Esophagus muscularis mucosa (tissue), 4 donors: ENCODE measurements at regions of chr11 and their contacts with region 1.

Region 1: DNA sequence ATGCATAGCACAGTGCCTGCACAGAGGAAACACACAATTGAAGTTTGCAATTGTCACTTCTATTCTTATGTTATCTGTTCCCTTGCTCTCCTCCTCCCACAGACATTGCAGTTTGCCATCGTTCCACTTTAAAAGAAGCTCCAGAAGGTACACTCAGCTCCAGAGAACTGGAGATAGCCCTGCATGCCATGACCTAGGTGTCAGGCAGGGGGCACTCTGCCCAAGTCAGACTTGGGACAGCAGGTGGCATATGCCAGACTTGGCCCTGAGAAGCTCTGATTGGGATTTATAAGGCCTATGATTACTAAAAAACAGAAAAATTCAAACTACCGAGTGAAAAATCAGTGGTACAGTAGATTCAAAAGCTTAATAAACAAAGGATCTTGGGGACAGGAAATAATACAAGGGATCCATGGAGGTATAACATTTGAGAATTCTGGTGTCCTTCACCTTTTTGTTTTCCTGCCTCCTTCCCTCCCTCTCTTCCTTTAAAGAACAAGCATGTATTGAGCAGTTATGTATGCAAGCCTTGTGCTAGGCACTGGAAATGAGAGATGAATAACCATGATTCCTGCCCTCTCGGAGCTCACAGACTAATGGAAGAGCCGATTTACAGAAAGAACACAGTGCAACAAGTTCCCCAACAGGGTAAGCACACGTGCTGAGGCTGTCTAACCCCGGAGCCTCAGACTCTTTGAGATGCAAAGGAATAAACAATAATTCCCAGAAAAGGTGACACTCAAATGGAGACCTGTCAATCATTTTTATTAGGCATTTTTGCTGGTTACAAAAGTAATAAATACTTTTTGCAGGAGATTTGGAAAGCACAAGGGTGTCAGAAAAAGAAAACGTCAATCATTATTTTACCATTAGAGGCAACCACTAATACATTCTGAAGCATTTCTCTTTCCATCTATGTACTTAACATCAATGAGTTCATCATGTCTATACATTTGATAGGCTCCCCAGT is 39.8 kb downstream of the TENM4 start:
- DNase-seq: no peak
- H3K4me3 ChIP-seq: no peak overlapping the region
- H3K27ac ChIP-seq: no peak overlapping the region
- H3K4me1 ChIP-seq: peaks cover 0 to 3% (median 0%) of the 10 kb centered on the region in 4 donors
- H3K27me3 ChIP-seq: no peaks in the 10 kb centered on the region
- CTCF ChIP-seq: peak; percentile 68 to 78 (median 71)
- EP300 ChIP-seq: no peak
- POLR2A ChIP-seq: no peak

Region 2: GRCh38 chr11:79440441-79441194 is 39.6 kb after region 1 on chr11 and contains the start of gene TENM4:
- intact Hi-C with region 1: loop called (anchors 5 kb)
- DNase-seq: no peak
- H3K4me3 ChIP-seq: peak within 1 kb of the TSS; percentile 63 to 84 (median 67)
- H3K27ac ChIP-seq: peak within 1 kb of the TSS; percentile 85 to 90 (median 88)
- H3K4me1 ChIP-seq: peaks cover 44 to 55% (median 54%) of the 10 kb centered on the region in 4 donors
- H3K27me3 ChIP-seq: peaks cover 0 to 56% (median 11%) of the 10 kb centered on the region in 4 donors
- CTCF ChIP-seq: peak; percentile 40 to 47 (median 44)
- EP300 ChIP-seq: no peak
- POLR2A ChIP-seq: no peak
- total RNA-seq, gene TENM4: 4.1 to 9.6 (median 8.0) TPM

Region 3: GRCh38 chr11:79493555-79494171 is 92.7 kb after region 1 on chr11:
- intact Hi-C with region 1: loop called (anchors 2 kb)
- DNase-seq: no peak
- H3K4me3 ChIP-seq: no peak overlapping the region
- H3K27ac ChIP-seq: no peak overlapping the region
- H3K4me1 ChIP-seq: peaks cover 0 to 4% (median 0%) of the 10 kb centered on the region in 4 donors
- H3K27me3 ChIP-seq: no peaks in the 10 kb centered on the region
- CTCF ChIP-seq: peak; percentile 73 to 93 (median 89)
- EP300 ChIP-seq: no peak
- POLR2A ChIP-seq: no peak

Region 4: GRCh38 chr11:79536155-79536917 is 135.3 kb after region 1 on chr11:
- intact Hi-C with region 1: no loop called
- DNase-seq: peak; percentile 78
- H3K4me3 ChIP-seq: no peak overlapping the region
- H3K27ac ChIP-seq: no peak overlapping the region
- H3K4me1 ChIP-seq: no peaks in the 10 kb centered on the region
- H3K27me3 ChIP-seq: no peaks in the 10 kb centered on the region
- CTCF ChIP-seq: no peak
- EP300 ChIP-seq: no peak
- POLR2A ChIP-seq: no peak

Region 5: DNA sequence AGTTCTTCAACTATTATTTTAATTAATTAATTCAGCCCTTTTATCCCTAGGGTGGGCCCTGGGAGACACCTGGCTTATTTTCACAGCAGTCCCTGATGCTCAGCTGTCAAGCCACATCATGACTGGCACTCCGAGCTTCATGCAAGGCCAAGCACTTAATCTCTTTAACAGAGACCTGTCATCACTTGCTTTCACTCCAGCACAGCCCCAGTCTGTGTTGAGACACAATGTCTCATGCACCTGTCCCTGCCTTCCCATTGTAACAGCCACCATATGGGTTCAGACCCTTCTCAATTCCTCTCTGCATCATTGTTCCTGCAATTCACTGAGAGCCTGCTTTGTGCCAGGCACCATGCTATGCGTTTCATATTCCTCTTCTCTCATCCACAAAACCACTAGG is 262.0 kb after region 1 on chr11:
- intact Hi-C with region 1: no loop called
- DNase-seq: no peak
- H3K4me3 ChIP-seq: no peak overlapping the region
- H3K27ac ChIP-seq: no peak overlapping the region
- H3K4me1 ChIP-seq: no peaks in the 10 kb centered on the region
- H3K27me3 ChIP-seq: peaks cover 0 to 4% (median 0%) of the 10 kb centered on the region in 4 donors
- CTCF ChIP-seq: no peak
- EP300 ChIP-seq: no peak
- POLR2A ChIP-seq: no peak